Naive thymus-derived CD4-positive, alpha-beta T cell (primary cell): ENCODE measurements at regions of chr1 and their contacts with region 1.

Region 1: DNA sequence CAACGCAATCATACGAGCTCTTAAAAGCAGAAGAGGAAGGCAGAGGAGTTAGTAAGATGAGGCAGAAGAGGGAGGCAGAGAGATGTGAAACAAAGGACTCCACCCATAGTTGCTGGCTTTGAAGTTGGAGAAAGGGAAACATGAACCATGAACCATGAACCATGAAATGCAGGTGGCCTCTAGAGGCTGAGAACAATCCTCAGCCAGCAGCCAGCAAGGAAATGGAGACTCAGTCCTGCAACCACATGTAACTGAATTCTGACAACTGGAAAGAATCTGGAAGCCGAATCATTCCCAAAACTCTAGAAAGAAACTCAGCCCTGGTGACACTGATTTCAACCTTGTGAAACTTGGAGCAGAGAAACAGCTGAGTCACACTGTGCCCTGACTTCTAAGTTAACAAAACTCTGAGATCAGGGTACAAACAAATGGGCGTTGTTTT is 10.1 kb downstream of the DIPK1A start:
- DNase-seq: peak in 7 of 9 donors; percentile 25 to 57 (median 40)
- ATAC-seq: peak; percentile 91
- H3K4me3 ChIP-seq: no peak overlapping the region
- H3K4me3 Mint-ChIP-seq: no peak overlapping the region
- H3K27ac ChIP-seq: no peak overlapping the region
- H3K27ac Mint-ChIP-seq: no peak overlapping the region
- H3K4me1 ChIP-seq: peaks cover 21 to 39% of the 10 kb centered on the region in 2 donors
- H3K4me1 Mint-ChIP-seq: peaks cover 34 to 53% (median 46%) of the 10 kb centered on the region in 7 donors
- H3K27me3 ChIP-seq: no peaks in the 10 kb centered on the region
- H3K27me3 Mint-ChIP-seq: no peaks in the 10 kb centered on the region

Region 2: GRCh38 chr1:92230736-92231135 is 720.4 kb before region 1 on chr1:
- CTCF ChIA-PET with region 1: no interaction called
- POLR2A ChIA-PET with region 1: no interaction called
- intact Hi-C with region 1: no loop called
- DNase-seq: no peak
- ATAC-seq: no peak
- H3K4me3 ChIP-seq: no peak overlapping the region
- H3K4me3 Mint-ChIP-seq: no peak overlapping the region
- H3K27ac ChIP-seq: no peak overlapping the region
- H3K27ac Mint-ChIP-seq: no peak overlapping the region
- H3K4me1 ChIP-seq: no peaks in the 10 kb centered on the region
- H3K4me1 Mint-ChIP-seq: no peaks in the 10 kb centered on the region
- H3K27me3 ChIP-seq: no peaks in the 10 kb centered on the region
- H3K27me3 Mint-ChIP-seq: peaks cover 0 to 4% (median 0%) of the 10 kb centered on the region in 5 donors

Region 3: GRCh38 chr1:92877792-92878191 is 73.4 kb before region 1 on chr1:
- CTCF ChIA-PET with region 1: interaction called, 3 read pairs
- POLR2A ChIA-PET with region 1: no interaction called
- intact Hi-C with region 1: loop called in 1 of 2 experiments (anchors 5 kb)
- DNase-seq: peak in 1 of 9 donors; percentile 16
- ATAC-seq: no peak
- H3K4me3 ChIP-seq: peak overlapping the region; percentile 15
- H3K4me3 Mint-ChIP-seq: peak overlapping the region in 8 of 10 donors; percentile 58 to 75 (median 68)
- H3K27ac ChIP-seq: peak overlapping the region; percentile 53
- H3K27ac Mint-ChIP-seq: peak overlapping the region; percentile 51 to 94 (median 84)
- H3K4me1 ChIP-seq: peaks cover 18 to 22% of the 10 kb centered on the region in 2 donors
- H3K4me1 Mint-ChIP-seq: peaks cover 24 to 47% (median 42%) of the 10 kb centered on the region in 7 donors
- H3K27me3 ChIP-seq: no peaks in the 10 kb centered on the region
- H3K27me3 Mint-ChIP-seq: no peaks in the 10 kb centered on the region

Region 4: DNA sequence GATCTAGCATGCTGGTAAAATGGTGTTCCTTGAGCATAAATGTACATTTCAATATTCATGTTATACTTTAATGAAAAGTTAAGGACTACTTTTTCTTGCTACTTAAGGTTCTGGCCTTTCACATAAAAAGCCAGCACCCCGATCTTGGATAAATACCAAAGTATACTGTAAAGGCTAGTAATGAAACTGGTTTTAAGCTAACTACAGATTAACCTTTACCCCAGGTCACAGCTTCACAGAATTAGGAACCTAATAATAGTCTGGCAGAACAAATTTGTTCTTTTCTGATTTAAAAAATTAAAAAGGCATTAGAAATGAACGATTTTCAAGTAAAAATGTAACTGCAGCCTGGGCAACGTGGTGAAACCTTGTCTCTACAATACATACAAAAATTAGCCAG is 13.4 kb before region 1 on chr1:
- CTCF ChIA-PET with region 1: interaction called, 3 read pairs
- POLR2A ChIA-PET with region 1: no interaction called
- intact Hi-C with region 1: loop called in 1 of 2 experiments (anchors 2 kb)
- DNase-seq: no peak
- ATAC-seq: no peak
- H3K4me3 ChIP-seq: no peak overlapping the region
- H3K4me3 Mint-ChIP-seq: peak overlapping the region in 1 of 10 donors; percentile 15
- H3K27ac ChIP-seq: no peak overlapping the region
- H3K27ac Mint-ChIP-seq: peak overlapping the region in 1 of 9 donors; percentile 55
- H3K4me1 ChIP-seq: peaks cover 4 to 10% of the 10 kb centered on the region in 2 donors
- H3K4me1 Mint-ChIP-seq: peaks cover 16 to 77% (median 65%) of the 10 kb centered on the region in 7 donors
- H3K27me3 ChIP-seq: no peaks in the 10 kb centered on the region
- H3K27me3 Mint-ChIP-seq: no peaks in the 10 kb centered on the region

Region 5: GRCh38 chr1:93328809-93329760 is 377.9 kb after region 1 on chr1:
- CTCF ChIA-PET with region 1: no interaction called
- POLR2A ChIA-PET with region 1: no interaction called
- intact Hi-C with region 1: no loop called
- DNase-seq: no peak
- ATAC-seq: no peak
- H3K4me3 ChIP-seq: no peak overlapping the region
- H3K4me3 Mint-ChIP-seq: no peak overlapping the region
- H3K27ac ChIP-seq: no peak overlapping the region
- H3K27ac Mint-ChIP-seq: no peak overlapping the region
- H3K4me1 ChIP-seq: no peaks in the 10 kb centered on the region
- H3K4me1 Mint-ChIP-seq: peaks cover 0 to 2% (median 0%) of the 10 kb centered on the region in 7 donors
- H3K27me3 ChIP-seq: no peaks in the 10 kb centered on the region
- H3K27me3 Mint-ChIP-seq: no peaks in the 10 kb centered on the region